ENCODE measurements at regions of chr17 and their contacts with region 1.

Region 1: DNA sequence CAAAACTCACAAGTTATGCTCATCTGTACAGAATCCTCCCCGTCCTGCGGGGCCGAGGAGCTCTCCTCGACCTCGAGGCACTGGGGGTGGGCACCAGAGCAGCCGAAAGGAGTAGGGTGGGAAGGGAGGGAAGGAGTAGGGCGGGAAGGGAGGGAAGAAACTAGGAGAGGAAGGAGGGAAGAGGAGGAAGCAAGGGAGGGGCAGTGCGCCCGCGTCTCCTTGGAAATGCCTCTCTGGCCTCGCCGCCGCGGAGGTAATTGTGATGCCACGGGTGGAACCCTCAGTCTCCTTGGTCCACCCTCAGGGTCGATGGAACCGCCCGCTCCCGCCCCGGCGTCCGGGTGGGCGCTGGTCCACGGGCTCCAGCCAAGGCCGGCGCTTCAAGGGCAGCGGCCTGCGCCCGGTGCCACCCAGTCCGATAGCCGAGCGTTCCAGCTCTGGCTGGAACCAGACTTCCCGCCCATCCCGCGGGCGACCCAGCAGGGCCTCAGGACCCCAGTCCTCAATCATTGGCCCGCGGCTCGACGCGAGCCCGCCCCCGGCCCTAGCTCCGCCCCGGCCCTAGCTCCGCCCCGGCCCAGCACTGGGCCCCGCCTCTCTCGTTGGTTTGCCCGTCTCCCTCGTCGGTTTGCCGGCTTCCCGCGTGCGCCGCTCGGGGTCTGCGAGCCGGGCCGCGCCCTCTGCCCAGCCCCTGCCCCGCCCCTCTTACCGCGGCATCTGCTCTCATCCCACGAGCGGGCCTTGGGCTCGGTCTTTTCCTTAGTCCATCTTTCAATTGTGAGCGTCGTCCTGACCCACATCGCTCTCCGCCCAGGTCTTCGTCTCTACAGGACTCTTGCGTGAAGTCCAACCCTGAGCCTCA is 596 bp downstream of the PROCA1 start:
- DNase-seq: peak; percentile 90 to 95 (median 91)
- ATAC-seq: peak; percentile 85 to 96 (median 94)
- H3K4me3 ChIP-seq: peak overlapping the region; percentile 22 to 93 (median 72)
- H3K27ac ChIP-seq: peak overlapping the region; percentile 54 to 97 (median 93)
- H3K4me1 ChIP-seq: peaks cover 0 to 29% (median 14%) of the 10 kb centered on the region in 12 donors
- H3K27me3 ChIP-seq: no peaks in the 10 kb centered on the region
- CTCF ChIP-seq: no peak
- POLR2A ChIP-seq: peak in 1 of 2 donors; percentile 92

Region 2: DNA sequence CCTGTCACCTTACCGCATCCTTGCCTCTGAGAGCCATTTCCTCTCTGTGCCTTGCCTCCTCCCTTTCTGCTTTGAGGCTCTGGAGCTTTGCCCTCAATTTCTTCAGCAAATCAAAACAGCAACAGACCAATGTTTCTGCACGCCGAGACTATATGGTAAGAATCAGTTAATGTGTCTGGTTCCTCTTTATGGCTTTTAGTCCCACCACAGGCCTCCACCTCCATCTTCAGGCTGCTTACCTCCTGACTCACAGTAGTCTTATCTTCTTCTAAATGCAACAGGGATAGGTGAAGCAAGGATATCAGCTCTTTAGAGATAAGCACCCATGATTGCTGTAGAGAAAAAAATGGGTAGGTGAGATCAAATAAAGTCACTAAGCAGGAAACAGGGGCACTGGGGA is 125.2 kb before region 1 on chr17:
- intact Hi-C with region 1: no loop called
- DNase-seq: no peak
- ATAC-seq: no peak
- H3K4me3 ChIP-seq: no peak overlapping the region
- H3K27ac ChIP-seq: no peak overlapping the region
- H3K4me1 ChIP-seq: no peaks in the 10 kb centered on the region
- H3K27me3 ChIP-seq: no peaks in the 10 kb centered on the region
- CTCF ChIP-seq: no peak
- POLR2A ChIP-seq: no peak

Region 3: DNA sequence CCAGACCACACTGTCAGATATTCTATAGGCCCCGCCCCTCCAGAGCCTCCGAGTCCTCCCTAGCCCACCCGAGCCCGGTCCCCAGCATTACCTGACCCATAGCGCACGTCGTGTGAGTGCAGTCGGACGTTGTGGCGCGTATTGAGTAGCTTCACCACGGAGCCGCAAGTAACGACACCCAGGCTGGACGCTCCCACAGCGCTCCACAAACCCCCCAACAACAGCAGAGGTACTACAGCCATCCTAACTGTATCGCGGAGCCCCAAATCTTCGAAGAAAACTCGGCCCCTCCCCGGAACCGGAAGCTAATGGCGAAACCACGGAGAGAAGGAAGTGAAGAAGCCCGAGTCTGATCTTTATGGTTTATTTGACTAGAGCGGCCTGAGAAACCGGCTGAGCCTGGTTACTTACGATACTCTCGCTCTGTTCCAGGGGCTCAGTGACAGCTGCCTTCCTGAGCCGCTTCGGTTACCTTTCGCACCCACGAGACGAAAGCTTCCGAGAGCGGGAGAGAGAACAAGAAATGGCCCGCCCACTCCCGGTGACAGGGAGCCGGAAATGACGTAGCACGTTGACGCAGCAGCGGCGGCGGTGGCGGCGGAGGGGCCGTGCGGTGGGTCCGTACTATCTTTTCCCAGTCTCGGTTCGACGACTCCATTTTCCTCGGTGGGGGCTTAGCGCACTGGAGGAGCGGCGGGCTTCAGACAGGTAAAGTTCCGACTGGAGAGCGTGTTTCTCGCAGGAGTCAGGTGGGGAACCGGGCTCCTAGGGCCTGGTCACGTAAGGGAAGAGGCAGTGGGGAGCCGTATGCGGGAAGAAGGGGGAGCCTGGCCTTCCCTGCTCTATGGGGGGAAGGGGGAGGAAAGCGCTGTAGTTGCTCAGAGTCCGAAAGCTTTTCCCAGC is 49.2 kb before region 1 on chr17 and contains the starts of genes SDF2 and SUPT6H:
- intact Hi-C with region 1: loop called in 2 of 10 experiments (anchors 5 to 10 kb)
- DNase-seq: peak; percentile 91 to 94 (median 93)
- ATAC-seq: peak; percentile 90 to 97 (median 96)
- H3K4me3 ChIP-seq: peak within 1 kb of the TSS; percentile 55 to 97 (median 86)
- H3K27ac ChIP-seq: peak within 1 kb of the TSS; percentile 84 to 99 (median 96)
- H3K4me1 ChIP-seq: peaks cover 0 to 49% (median 29%) of the 10 kb centered on the region in 12 donors
- H3K27me3 ChIP-seq: no peaks in the 10 kb centered on the region
- CTCF ChIP-seq: no peak
- POLR2A ChIP-seq: peak in 1 of 2 donors; percentile 80
- total RNA-seq, gene SDF2: 19.6 to 39.1 (median 34.2) TPM
- total RNA-seq, gene SUPT6H: 37.2 to 91.6 (median 49.1) TPM

Measured in heart left ventricle (tissue), 16 donors.